ENCODE measurements at regions of chr2 and their contacts with region 1.

Region 1: DNA sequence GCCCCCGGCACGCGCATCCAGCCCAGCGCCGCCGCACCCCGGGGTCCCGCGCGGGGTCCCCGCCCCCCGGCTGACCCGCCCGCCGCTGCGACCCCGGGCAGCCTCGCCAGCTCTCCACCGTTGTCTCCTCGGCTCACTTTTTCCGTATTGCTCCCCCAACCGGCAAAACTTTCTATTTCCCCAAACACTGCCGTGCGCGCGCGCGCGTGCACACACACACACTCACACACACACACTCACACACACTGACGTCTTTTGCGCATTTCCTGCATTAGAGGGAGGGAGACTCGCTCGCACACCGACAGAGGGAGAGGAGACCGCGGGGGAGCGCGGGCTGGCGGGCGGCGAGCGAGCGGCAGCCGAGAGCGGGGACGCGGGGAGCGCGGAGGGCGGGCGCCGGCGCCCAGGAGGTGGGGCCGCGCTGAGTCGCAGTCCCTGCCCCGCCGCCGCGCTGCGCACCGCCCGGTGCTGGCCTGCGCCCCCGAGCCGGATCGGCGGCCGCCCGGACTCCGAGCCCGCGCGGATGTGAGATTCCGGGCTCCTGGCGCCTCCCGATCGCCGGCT is 542 bp upstream of the PRKCE start:
- DNase-seq: peak; percentile 96 to 97 (median 97)
- H3K4me3 ChIP-seq: peak overlapping the region; percentile 65 to 85
- H3K4me3 Mint-ChIP-seq: peak overlapping the region; percentile 91 to 98 (median 97)
- H3K27ac ChIP-seq: peak overlapping the region; percentile 71
- H3K27ac Mint-ChIP-seq: peak overlapping the region; percentile 87 to 99 (median 98)
- H3K4me1 ChIP-seq: peaks cover 21% of the 10 kb centered on the region
- H3K4me1 Mint-ChIP-seq: peaks cover 20 to 38% (median 27%) of the 10 kb centered on the region in 4 donors
- H3K27me3 ChIP-seq: no peaks in the 10 kb centered on the region
- H3K27me3 Mint-ChIP-seq: peaks cover 1 to 2% of the 10 kb centered on the region in 2 donors

Region 2: GRCh38 chr2:45300026-45300750 is 350.7 kb before region 1 on chr2:
- CTCF ChIA-PET with region 1: no interaction called
- POLR2A ChIA-PET with region 1: no interaction called
- intact Hi-C with region 1: no loop called
- DNase-seq: no peak
- H3K4me3 ChIP-seq: no peak overlapping the region
- H3K4me3 Mint-ChIP-seq: no peak overlapping the region
- H3K27ac ChIP-seq: no peak overlapping the region
- H3K27ac Mint-ChIP-seq: no peak overlapping the region
- H3K4me1 ChIP-seq: no peaks in the 10 kb centered on the region
- H3K4me1 Mint-ChIP-seq: no peaks in the 10 kb centered on the region
- H3K27me3 ChIP-seq: no peaks in the 10 kb centered on the region
- H3K27me3 Mint-ChIP-seq: peaks cover 8 to 14% of the 10 kb centered on the region in 2 donors

Region 3: GRCh38 chr2:45567974-45568789 is 82.8 kb before region 1 on chr2:
- CTCF ChIA-PET with region 1: interaction called, 5 read pairs
- POLR2A ChIA-PET with region 1: interaction called, 22 read pairs
- intact Hi-C with region 1: loop called (anchors 5 kb)
- DNase-seq: peak in 4 of 5 donors; percentile 73 to 84 (median 78)
- H3K4me3 ChIP-seq: peak overlapping the region; percentile 12 to 56
- H3K4me3 Mint-ChIP-seq: peak overlapping the region; percentile 83 to 94 (median 87)
- H3K27ac ChIP-seq: peak overlapping the region; percentile 72
- H3K27ac Mint-ChIP-seq: peak overlapping the region; percentile 79 to 98 (median 97)
- H3K4me1 ChIP-seq: peaks cover 18% of the 10 kb centered on the region
- H3K4me1 Mint-ChIP-seq: peaks cover 15 to 21% (median 18%) of the 10 kb centered on the region in 4 donors
- H3K27me3 ChIP-seq: no peaks in the 10 kb centered on the region
- H3K27me3 Mint-ChIP-seq: no peaks in the 10 kb centered on the region

Region 4: GRCh38 chr2:45611020-45611737 is 39.8 kb before region 1 on chr2 and contains the start of gene SRBD1:
- CTCF ChIA-PET with region 1: interaction called, 6 read pairs
- POLR2A ChIA-PET with region 1: interaction called, 9 read pairs
- intact Hi-C with region 1: loop called (anchors 1 kb)
- DNase-seq: peak; percentile 75 to 86 (median 80)
- H3K4me3 ChIP-seq: peak within 1 kb of the TSS; percentile 57 to 90
- H3K4me3 Mint-ChIP-seq: peak within 1 kb of the TSS; percentile 94 to 99 (median 98)
- H3K27ac ChIP-seq: peak within 1 kb of the TSS; percentile 63
- H3K27ac Mint-ChIP-seq: peak within 1 kb of the TSS; percentile 93 to 98 (median 96)
- H3K4me1 ChIP-seq: peaks cover 7% of the 10 kb centered on the region
- H3K4me1 Mint-ChIP-seq: peaks cover 17 to 28% (median 21%) of the 10 kb centered on the region in 4 donors
- H3K27me3 ChIP-seq: no peaks in the 10 kb centered on the region
- H3K27me3 Mint-ChIP-seq: no peaks in the 10 kb centered on the region
- total RNA-seq, gene SRBD1: 22.4 to 23.7 TPM

Region 5: DNA sequence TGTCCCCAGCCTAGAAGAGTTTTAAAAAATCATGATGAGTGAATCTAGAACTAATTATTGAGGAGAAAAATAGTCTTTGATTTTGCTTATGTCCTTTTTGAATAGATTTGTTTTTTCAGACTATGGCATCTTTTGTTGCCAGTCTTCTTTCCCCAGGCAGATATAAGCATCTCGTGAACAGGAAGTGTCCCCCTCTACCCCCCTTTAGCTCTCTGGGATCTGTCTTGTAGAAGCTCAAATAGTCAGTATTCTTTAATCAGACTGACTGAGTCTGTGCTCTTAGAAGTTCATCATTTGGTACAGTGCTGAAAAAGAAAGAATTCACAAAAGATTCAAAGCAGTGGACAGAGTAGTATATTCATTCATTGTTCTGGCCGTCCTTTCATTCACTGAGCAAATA is 10.9 kb after region 1 on chr2:
- CTCF ChIA-PET with region 1: interaction called, 7 read pairs
- POLR2A ChIA-PET with region 1: interaction called, 16 read pairs
- intact Hi-C with region 1: no loop called
- DNase-seq: no peak
- H3K4me3 ChIP-seq: no peak overlapping the region
- H3K4me3 Mint-ChIP-seq: no peak overlapping the region
- H3K27ac ChIP-seq: no peak overlapping the region
- H3K27ac Mint-ChIP-seq: no peak overlapping the region
- H3K4me1 ChIP-seq: no peaks in the 10 kb centered on the region
- H3K4me1 Mint-ChIP-seq: peaks cover 3 to 8% (median 4%) of the 10 kb centered on the region in 4 donors
- H3K27me3 ChIP-seq: no peaks in the 10 kb centered on the region
- H3K27me3 Mint-ChIP-seq: no peaks in the 10 kb centered on the region

Region 6: DNA sequence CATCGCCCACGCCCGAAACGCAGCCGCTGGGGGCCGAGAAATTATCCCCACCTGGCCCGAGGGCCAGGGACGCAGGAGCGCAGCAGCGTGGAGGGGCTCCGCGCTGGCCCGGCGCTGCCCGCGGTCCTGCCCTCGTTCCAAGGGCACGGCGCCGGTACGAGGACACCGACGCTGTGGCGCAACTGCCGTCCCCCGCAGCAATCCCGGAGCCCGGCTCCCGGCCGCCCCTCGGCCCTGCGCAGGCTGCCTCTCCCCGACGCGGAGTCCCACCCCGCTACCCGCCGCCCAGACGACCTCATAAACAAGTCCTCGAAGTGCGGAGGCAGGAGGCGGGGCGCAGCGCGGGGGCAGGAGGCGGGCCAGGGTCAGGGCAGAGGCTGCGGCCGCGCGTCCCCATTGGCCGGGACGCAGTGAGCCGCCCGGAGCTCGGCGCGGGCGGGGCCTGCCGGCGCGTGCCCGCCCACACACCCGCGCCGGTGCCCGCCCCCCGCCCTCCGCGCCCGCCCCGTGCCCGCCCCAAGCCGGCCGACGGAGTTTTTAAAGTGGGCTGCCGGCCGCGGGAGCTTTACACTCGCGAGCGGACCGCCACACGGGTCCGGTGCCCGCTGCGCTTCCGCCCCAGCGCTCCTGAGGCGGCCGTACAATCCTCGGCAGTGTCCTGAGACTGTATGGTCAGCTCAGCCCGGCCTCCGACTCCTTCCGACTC is 646.1 kb after region 1 on chr2 and contains the start of gene EPAS1:
- CTCF ChIA-PET with region 1: no interaction called
- POLR2A ChIA-PET with region 1: no interaction called
- intact Hi-C with region 1: loop called (anchors 2 kb)
- DNase-seq: peak; percentile 71 to 88 (median 75)
- H3K4me3 ChIP-seq: peak within 1 kb of the TSS; percentile 45 to 72
- H3K4me3 Mint-ChIP-seq: peak within 1 kb of the TSS; percentile 87 to 96 (median 92)
- H3K27ac ChIP-seq: no peak within 1 kb of the TSS
- H3K27ac Mint-ChIP-seq: peak within 1 kb of the TSS; percentile 68 to 94 (median 89)
- H3K4me1 ChIP-seq: peaks cover 29% of the 10 kb centered on the region
- H3K4me1 Mint-ChIP-seq: peaks cover 14 to 47% (median 24%) of the 10 kb centered on the region in 4 donors
- H3K27me3 ChIP-seq: peaks cover 21% of the 10 kb centered on the region
- H3K27me3 Mint-ChIP-seq: peaks cover 22 to 26% of the 10 kb centered on the region in 2 donors
- total RNA-seq, gene EPAS1: 2.3 to 2.7 TPM

Measured in CD4-positive, alpha-beta memory T cell (primary cell).